ENCODE measurements at regions of chr10 and their contacts with region 1.

Region 1: GRCh38 chr10:57579926-57580325 is 687.8 kb downstream of the IPMK start:
- DNase-seq: no peak
- ATAC-seq: no peak

Region 2: DNA sequence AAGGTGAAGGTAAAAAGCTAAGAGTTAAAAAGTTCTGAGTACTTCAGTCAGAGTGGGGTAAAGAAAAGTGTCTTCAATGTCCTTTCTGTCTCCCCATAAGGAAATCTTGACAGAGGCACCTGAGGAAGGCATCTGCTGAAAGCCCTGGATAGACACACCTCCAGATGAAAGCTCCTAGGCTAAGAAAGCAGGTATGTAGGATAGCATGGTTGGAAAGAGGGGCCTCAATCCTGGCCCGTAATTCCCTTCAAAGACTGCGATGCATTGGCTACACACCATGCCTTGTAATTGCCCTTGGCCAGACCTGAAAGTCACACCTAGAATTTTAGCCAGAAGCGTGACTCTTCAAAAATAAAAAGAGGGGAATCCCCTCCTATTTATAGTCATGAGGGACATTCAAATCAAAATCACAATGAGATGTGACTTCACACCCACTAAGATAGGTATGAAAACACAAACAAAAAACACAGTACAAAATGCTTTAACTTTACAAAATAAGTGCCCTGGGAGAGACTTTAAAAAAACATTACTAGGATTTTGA is 121.9 kb before region 1 on chr10:
- intact Hi-C with region 1: no loop called
- DNase-seq: no peak
- ATAC-seq: no peak

Region 3: DNA sequence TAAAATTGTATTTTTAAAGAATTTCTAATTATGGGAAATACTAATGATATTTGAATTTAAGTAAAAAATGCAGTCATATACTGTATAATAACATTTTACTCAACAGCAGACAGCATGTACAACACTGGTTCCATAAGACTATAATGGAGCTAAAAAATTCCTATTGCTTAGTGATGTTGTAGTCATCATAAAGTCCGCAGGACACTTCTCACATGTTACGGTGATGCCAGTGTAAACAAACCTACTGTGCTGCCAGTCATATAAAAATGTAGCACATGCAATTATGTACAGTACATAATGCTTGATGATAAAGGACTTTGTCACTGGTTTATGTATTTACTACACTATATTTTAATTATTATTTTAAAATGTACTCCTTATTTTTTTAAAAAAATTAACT is 58.5 kb after region 1 on chr10:
- intact Hi-C with region 1: no loop called
- DNase-seq: no peak
- ATAC-seq: no peak

Region 4: DNA sequence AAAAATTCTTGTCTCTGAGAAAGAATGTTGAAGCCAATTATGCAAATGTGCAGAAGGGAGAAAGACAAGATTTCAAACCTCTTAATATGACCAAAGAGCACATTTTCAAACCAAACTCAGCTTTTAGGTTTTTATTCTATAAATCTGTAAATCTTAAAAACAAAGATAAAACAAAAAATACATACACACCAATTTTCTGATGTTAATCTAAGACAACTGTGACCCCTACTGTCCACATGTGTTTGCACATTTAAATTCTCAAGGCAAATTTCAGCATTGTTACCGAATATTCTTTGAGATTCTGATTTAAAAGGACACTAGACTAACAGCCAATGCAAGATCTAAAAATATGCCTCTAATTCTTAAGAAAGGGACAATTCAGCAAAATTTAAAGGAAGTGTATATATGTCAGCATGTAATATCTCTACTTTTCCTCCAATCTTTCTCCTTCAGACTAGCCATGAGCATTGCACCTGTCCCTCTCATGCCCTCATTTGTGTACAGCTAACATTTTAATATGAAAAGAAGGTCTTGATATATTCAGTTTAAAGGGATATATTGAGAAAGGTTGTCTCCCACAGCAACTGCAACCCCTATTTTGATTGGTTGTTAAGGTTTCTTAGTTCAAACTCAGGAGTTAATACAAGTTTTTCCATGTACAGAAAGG is 269.9 kb after region 1 on chr10:
- intact Hi-C with region 1: loop called (anchors 1 kb)
- DNase-seq: no peak
- ATAC-seq: no peak

Region 5: DNA sequence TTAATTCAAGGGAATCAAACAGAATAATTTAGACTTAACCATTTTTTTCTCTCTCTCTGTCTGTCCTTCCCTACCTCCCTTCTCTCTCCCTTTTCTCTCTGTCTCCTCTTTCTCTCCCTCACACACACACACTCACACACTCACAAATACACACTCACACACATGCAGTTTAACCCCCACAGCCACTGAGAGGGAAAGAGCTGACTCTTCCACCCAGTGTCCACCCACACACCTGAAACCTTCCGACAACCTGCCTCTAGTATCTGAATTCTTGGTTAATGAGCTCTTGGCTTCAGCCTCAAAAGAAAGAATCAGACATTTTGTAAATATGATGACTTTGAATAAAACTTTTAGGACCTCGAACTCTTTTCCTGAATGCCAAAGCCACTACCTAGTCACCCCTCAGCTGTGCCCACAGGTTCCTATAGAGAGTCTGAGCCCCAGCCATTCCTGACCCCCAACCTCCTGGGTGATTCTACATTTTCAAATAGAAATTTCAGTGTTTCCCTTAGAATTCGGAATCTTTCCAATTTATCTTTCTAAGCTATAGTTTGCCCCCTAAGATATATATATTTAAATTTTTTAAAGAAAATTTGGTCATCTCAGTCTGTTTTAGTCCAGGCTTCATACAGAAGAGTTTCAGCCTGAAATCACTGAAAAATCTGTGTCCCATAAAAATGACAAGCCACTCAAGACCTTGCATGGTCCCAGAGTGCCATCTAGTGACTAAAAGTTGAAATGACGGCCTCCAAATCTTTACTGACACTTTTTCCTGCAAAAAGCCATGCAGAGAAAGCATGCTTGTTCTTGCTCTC is 485.0 kb after region 1 on chr10:
- intact Hi-C with region 1: loop called (anchors 2 kb)
- DNase-seq: no peak
- ATAC-seq: no peak